ENCODE measurements at regions of chr20 and their contacts with region 1.

Region 1: GRCh38 chr20:56483944-56484343 is 15.5 kb downstream of the RTF2 start:
- DNase-seq: no peak
- H3K4me3 ChIP-seq: no peak overlapping the region
- H3K27me3 ChIP-seq: no peaks in the 10 kb centered on the region
- CTCF ChIP-seq: no peak

Region 2: DNA sequence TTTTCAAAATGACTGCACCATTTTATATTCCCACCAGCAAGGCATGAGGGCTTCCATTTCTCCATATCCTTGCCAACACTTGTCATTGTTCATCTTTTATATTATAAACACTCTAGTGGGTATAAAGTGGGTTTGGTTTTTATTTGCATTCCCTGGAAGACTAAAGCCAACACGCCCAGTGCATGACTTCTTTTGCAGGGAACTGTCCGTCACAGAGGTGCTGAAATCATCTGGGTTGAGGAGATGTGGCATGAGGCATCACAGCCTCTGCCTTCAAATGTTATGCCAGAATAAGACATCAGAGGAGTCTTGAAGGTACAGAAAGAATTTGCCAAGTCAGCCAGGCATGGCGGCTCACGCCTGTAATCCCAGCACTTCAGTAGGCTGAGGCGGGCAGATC is 155.1 kb before region 1 on chr20:
- CTCF ChIA-PET with region 1: no interaction called
- POLR2A ChIA-PET with region 1: no interaction called
- DNase-seq: no peak
- H3K4me3 ChIP-seq: no peak overlapping the region
- H3K27me3 ChIP-seq: no peaks in the 10 kb centered on the region
- CTCF ChIP-seq: no peak

Region 3: DNA sequence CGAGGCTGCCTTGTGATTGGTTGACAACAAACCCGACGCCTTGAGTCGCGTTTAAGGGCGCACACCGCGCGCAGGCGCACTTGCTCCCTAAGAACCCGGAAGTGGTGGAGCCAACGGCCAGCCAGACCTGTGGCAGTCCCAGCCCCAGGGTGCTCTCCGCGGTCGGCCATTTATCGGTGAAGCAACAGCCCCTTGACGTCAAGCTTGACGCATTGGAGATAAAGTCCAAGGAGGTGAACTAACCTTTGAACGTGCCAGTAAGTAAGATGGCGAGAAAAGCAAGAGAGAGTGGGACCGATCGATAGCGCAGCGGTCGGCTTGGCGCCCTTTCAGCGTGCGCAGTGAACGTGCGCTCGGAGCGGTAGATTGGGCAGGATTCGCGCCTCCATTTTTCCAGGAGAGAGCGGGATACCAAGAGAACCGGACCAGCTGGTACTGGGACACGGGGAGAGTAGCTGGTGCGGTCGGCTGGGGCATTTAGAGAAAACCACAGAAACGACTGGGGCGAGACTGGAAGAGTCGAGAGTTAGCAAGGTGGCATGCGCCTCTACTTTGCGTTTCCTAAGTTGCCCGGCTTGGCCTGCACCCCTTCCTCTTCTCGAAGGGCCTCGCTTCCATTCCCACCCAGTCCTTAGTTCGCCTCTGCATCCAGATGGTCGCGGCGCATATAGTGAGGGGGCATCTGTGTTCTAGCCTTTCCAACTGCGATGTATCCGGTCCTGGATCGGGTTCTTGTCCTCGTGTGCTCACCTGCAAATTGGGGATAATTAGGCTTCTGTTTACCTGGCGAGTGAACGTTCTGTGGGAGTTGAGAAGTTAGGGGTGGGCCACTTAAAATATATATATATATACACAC is 91.4 kb before region 1 on chr20 and contains the start of gene CSTF1:
- CTCF ChIA-PET with region 1: interaction called, 10 read pairs
- POLR2A ChIA-PET with region 1: no interaction called
- DNase-seq: peak; percentile 99
- H3K4me3 ChIP-seq: peak within 1 kb of the TSS; percentile 87
- H3K27me3 ChIP-seq: no peaks in the 10 kb centered on the region
- CTCF ChIP-seq: no peak
- polyA plus RNA-seq, gene CSTF1: 59.5 and 70.9 TPM in 2 replicates

Region 4: GRCh38 chr20:56440346-56441007 is 43.5 kb before region 1 on chr20:
- CTCF ChIA-PET with region 1: no interaction called
- POLR2A ChIA-PET with region 1: no interaction called
- DNase-seq: no peak
- H3K4me3 ChIP-seq: no peak overlapping the region
- H3K27me3 ChIP-seq: no peaks in the 10 kb centered on the region
- CTCF ChIP-seq: no peak

Region 5: GRCh38 chr20:56468316-56469082 is 15.4 kb before region 1 on chr20 and contains the start of gene RTF2:
- CTCF ChIA-PET with region 1: no interaction called
- POLR2A ChIA-PET with region 1: no interaction called
- DNase-seq: peak; percentile 80
- H3K4me3 ChIP-seq: peak within 1 kb of the TSS; percentile 68
- H3K27me3 ChIP-seq: no peaks in the 10 kb centered on the region
- CTCF ChIP-seq: no peak
- polyA plus RNA-seq, gene RTF2: 126 and 145 TPM in 2 replicates